ENCODE measurements at regions of chr7 and their contacts with region 1.

Region 1: DNA sequence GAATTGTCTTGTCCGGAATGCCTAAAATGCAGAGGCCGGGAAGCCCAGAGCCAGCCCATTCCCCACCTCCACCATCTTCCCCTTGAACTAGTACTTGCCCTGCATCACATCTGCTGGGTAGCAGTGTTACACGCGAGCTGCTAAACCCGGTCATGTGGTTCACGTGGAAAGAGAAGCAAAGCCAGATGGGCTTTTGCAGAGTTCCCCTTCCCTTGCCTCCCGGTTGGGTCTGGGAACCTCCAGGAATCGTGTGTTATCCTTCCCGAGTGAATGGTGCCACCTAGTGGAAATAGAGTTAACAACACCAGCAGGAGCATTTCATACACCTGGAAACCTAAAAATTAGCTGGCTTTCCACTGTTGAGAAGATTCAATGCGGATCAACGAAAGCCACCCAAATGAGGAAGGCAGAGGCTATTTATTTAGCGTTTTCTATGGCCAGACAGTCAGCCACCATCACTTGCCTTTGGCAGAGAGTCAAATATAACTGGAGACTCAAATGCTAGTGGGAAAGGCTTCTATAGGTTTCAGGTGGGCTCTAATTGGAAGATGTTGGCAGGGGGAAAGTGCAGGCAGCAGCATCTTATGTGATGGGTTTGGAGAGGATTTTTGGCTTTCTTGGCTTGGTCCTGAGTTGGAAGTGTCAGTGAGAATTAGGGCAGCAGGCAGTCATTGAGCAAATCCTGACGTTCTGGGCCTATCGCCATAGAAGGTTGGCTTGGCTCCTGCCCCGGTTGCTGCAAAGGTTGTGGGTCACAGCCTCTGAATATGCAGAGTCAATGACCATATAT is 12.9 kb upstream of the DENND2A start:
- DNase-seq: peak; percentile 61 to 77 (median 72)
- ATAC-seq: peak; percentile 74
- H3K4me3 ChIP-seq: no peak overlapping the region
- H3K27ac ChIP-seq: no peak overlapping the region
- H3K4me1 ChIP-seq: peaks cover 22% of the 10 kb centered on the region
- H3K27me3 ChIP-seq: no peaks in the 10 kb centered on the region
- CTCF ChIP-seq: peak; percentile 71 to 95 (median 88)
- POLR2A ChIP-seq: no peak

Region 2: GRCh38 chr7:140390466-140391190 is 262.9 kb before region 1 on chr7:
- intact Hi-C with region 1: no loop called
- DNase-seq: peak in 1 of 4 donors; percentile 15
- ATAC-seq: no peak
- H3K4me3 ChIP-seq: no peak overlapping the region
- H3K27ac ChIP-seq: no peak overlapping the region
- H3K4me1 ChIP-seq: peaks cover 22% of the 10 kb centered on the region
- H3K27me3 ChIP-seq: no peaks in the 10 kb centered on the region
- CTCF ChIP-seq: no peak
- POLR2A ChIP-seq: no peak

Region 3: GRCh38 chr7:140517546-140518369 is 135.8 kb before region 1 on chr7:
- intact Hi-C with region 1: loop called (anchors 2 kb)
- DNase-seq: peak; percentile 87 to 92 (median 88)
- ATAC-seq: peak; percentile 91
- H3K4me3 ChIP-seq: no peak overlapping the region
- H3K27ac ChIP-seq: peak overlapping the region in 1 of 4 donors; percentile 12
- H3K4me1 ChIP-seq: peaks cover 8% of the 10 kb centered on the region
- H3K27me3 ChIP-seq: no peaks in the 10 kb centered on the region
- CTCF ChIP-seq: peak; percentile 75 to 88 (median 84)
- POLR2A ChIP-seq: no peak

Region 4: GRCh38 chr7:141291541-141291940 is 638.0 kb after region 1 on chr7:
- intact Hi-C with region 1: no loop called
- DNase-seq: no peak
- ATAC-seq: no peak
- H3K4me3 ChIP-seq: no peak overlapping the region
- H3K27ac ChIP-seq: no peak overlapping the region
- H3K4me1 ChIP-seq: no peaks in the 10 kb centered on the region
- H3K27me3 ChIP-seq: no peaks in the 10 kb centered on the region
- CTCF ChIP-seq: no peak
- POLR2A ChIP-seq: no peak